ENCODE measurements at regions of chr16 and their contacts with region 1.

Region 1: GRCh38 chr16:4682616-4683254 is 10.6 kb upstream of the NUDT16L1 start:
- DNase-seq: peak; percentile 45 to 73 (median 73)
- H3K4me3 ChIP-seq: no peak overlapping the region
- H3K27ac ChIP-seq: no peak overlapping the region
- H3K4me1 ChIP-seq: peaks cover 0 to 4% (median 0%) of the 10 kb centered on the region in 4 experiments
- H3K27me3 ChIP-seq: no peaks in the 10 kb centered on the region

Region 2: DNA sequence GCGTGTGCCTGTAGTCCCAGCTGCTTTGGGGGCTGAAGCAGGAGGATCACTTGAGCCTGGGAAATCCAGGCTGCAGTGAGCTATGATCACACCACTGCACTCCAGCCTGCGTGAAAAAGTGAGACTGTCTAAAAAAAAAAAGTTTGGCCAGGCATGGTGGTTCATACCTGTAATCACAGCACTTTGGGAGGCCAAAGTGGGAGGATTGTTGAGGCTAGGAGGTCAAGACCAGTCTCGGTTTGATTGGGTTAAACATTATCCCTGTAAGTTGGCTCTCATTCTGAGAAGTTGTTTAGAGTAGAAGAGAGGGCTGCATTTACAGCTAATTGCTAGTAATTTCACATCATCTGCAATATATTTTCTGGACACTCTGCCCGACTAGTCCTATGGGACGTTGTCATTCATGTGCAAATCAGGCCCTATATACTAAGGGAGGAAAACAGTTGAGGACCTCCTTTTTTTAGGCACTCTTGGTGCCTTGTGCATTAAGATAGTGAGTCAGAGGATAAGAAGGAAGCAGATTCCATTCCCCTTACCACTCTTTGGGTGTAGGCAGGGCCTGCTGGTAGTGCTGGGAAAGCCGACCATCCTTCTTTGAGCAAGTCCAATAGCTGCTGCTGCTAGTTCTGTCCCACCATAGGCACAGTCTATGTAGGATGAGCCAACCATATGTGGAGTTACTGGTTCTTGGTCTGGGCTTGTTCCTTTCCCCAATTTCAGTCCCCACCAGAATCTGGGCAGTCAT is 187.8 kb before region 1 on chr16:
- CTCF ChIA-PET with region 1: no interaction called
- POLR2A ChIA-PET with region 1: no interaction called
- DNase-seq: no peak
- H3K4me3 ChIP-seq: no peak overlapping the region
- H3K27ac ChIP-seq: no peak overlapping the region
- H3K4me1 ChIP-seq: no peaks in the 10 kb centered on the region
- H3K27me3 ChIP-seq: no peaks in the 10 kb centered on the region

Region 3: DNA sequence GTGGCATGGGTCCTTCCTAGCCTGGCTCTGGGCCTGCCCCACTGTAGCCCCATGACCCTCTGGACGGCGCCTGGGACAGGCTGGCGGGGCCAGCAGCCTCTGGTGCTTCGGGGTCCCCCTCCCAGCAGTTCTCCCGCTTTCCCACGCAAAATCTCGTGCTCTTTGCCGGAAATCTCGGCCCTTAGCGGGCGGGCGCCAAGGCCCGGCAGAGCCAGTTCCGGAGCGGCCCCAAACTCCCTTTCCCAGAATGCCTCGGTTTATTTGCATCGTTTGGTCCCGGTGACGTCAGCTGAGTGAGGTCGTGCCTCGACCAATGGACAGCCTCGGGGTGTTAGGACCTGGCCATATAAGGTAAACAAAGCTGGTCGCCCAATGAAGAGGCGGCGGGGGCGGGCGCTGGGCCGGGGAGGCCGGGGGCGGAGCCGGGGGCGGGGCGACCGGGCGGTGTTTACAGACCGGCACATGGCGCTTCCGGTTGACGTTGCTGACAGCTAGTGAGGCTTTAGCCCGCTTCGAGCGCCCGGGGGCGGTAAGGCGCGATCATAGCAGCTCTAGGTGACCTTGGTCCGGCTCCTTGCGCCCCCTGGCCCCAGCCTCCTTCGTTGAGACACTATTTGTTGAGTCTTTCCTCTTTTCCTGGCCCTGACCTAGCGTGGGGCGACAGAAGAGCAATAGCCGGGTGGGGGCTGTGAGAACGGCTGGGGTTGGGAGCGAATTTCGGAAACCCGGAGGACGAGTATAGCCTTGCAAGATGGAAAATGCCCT is 66.5 kb before region 1 on chr16:
- CTCF ChIA-PET with region 1: interaction called, 10 read pairs
- POLR2A ChIA-PET with region 1: no interaction called
- DNase-seq: peak; percentile 100
- H3K4me3 ChIP-seq: peak overlapping the region; percentile 26 to 90 (median 55)
- H3K27ac ChIP-seq: peak overlapping the region; percentile 62 to 94
- H3K4me1 ChIP-seq: peaks cover 2 to 55% (median 47%) of the 10 kb centered on the region in 4 experiments
- H3K27me3 ChIP-seq: no peaks in the 10 kb centered on the region

Region 4: DNA sequence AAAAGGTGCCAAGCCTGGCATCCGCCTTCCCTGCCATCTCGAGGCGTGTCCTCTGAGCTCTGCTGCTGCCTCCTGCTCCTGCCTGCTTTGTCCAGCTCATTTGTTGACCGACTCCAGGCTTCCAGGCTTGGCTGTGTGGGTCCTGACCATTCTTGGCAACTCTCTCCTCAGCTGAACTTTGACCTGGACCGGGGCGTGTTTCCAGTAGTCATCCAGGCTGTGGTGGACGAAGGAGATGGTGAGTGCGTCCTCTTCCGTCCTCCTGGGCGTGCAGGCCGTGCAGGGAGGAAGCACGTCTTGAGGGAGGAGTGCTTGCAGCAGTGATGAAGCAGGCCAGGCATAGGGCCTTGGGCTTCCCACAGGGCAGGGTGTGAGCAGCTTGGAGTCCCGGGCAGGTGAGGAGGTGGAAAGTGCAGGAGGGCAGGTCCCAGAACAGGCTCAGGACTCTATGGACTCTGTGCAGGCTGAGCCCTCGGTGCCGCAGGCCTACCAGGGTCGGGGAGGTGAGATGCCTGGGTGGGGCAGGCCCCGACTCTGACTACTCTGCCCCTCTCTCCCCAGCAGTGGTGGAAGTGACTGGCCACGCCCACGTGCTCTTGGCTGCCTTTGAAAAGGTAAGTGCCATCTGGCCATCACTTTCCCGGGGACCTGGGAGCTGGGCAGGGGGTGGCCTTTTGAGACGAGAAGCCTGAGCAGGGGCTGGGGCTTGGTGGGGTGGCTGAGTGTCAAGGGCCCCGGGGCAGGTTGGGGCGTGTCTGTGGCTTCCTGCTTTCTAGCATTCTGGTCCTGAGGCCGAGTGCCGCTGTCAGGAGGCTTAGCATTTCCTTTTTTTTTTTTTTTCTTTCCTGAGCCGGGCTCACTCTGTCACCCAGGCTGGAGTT is 18.0 kb before region 1 on chr16:
- CTCF ChIA-PET with region 1: interaction called, 10 read pairs
- POLR2A ChIA-PET with region 1: no interaction called
- DNase-seq: peak; percentile 52 to 81 (median 78)
- H3K4me3 ChIP-seq: peak overlapping the region in 3 of 7 experiments; percentile 0 to 26 (median 14)
- H3K27ac ChIP-seq: no peak overlapping the region
- H3K4me1 ChIP-seq: peaks cover 5 to 70% (median 64%) of the 10 kb centered on the region in 4 experiments
- H3K27me3 ChIP-seq: no peaks in the 10 kb centered on the region

Region 5: DNA sequence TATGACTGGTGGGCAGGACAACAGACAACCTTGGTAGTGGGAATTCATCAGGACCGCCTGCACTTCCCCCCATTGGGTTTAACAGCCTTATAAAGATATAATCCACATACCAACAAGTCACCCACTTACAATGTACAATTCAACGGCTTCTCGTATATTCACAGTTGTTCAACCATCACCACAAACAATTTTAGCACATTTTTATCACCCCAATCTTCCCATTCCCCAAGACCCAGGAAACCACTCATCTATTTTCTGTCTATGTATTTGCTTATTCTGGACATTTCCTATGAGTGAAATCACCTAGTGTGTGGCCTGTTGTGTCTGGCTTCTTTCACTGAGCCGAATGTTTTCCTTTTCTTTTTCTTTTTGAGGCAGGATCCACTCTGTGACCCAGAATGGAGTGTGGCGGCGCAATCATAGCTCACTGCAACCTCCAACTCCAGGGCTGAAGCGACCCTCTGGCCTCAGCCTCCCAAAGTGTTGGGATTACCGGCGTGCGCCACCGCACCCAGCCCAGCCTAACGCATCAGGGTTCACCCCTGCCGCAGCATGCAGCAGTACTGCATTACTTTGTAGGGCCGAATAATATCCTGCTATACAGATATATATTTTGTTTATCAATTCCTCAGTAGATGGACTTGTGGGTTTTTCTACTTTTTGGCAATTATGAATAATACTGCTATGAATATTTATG is 40.5 kb after region 1 on chr16:
- CTCF ChIA-PET with region 1: no interaction called
- POLR2A ChIA-PET with region 1: no interaction called
- DNase-seq: no peak
- H3K4me3 ChIP-seq: no peak overlapping the region
- H3K27ac ChIP-seq: no peak overlapping the region
- H3K4me1 ChIP-seq: no peaks in the 10 kb centered on the region
- H3K27me3 ChIP-seq: no peaks in the 10 kb centered on the region

Measured in common myeloid progenitor, CD34-positive (primary cell).